AG04450 (cell line): ENCODE measurements at regions of chr1 and their contacts with region 1.

Region 1: DNA sequence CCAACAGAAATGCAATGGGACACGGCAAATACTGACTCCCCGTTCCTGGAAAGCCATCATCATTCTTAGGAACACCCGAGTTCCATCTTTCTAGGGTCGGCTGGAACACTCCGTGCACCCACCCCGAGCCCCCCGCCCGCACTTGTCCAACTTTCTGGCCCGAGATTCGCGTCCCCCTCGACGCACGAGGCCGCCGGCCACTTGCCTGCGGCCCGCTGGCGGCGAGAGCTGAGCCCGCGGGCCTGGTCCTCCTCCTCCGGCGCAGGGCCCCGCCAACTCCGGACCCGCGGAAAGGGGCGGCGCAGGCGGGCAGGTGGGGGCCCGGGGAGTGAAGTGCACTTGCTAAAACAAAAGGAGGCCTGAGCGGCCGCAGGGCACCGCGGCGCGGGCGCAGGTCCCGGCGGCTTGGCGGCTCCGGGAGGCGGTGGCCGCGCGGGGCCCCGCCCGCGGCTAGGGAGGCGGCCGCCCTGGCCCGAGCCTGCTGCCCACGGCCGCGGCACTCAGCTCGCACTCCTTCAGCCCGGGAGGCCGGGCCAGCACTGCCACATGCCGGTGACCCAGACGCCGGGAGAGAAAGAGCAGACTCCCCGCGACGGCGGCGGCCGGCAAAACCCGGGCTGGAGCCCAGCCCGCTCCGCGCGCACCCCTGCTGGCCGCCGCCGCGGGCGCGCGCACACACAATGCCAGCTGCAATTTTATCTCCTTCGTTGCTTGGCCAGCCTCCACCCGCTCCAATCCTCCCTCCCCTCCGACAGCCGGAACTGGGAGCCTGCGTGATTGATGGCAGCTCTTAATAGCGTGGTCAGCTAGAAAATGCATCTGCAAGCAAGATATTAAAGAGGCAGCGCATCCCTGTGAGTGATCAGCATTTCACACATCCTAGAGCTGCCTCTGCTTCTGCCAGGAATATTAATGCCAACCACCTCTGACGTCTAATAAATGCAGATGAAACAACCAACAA is 114.3 kb downstream of the RERE start:
- DNase-seq: peak; percentile 68
- H3K4me3 ChIP-seq: peak overlapping the region; percentile 77
- H3K27ac ChIP-seq: peak overlapping the region; percentile 35
- H3K27me3 ChIP-seq: no peaks in the 10 kb centered on the region
- CTCF ChIP-seq: peak; percentile 11; the same call in 1 of the 2 replicates

Region 2: DNA sequence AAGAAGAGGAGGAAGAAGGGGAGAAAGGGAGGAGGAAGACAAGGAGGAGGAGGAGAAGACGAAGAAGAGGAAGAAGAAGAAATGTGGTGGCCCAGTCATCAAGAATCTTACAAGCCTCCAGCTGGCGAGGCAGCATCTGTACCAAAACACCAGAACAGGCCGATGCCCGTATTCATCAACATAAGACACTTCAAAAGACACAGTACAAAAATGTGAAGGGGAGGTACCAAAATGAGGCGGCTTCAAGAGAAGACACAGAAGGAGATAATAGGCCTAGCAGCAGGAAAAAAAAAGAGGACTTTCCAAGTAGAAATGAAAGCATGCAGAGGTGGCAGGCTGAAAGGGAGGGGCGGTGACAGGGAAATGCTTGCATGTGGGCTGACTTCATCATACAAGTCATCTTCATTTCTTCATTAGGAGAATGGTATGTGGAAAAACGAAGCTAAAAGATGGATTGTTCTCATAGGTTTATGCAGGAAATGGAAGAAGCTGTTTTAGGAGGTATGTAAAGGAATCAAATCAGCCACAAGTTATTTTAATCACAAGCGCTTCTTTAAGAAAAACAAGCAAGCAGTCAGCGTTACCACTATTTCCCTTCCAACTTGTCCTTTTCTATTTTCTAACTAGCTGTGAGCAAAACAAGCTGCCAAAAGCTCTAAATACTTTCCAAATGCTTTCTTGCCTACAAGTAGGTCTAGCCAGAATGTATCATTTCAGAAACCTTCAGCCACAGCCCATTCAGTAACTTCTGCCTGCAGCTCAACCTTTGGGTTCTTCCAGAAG is 192.9 kb before region 1 on chr1:
- CTCF ChIA-PET with region 1: no interaction called
- POLR2A ChIA-PET with region 1: no interaction called
- DNase-seq: peak; percentile 67
- H3K4me3 ChIP-seq: peak overlapping the region; percentile 39
- H3K27ac ChIP-seq: peak overlapping the region; percentile 88
- H3K27me3 ChIP-seq: no peaks in the 10 kb centered on the region
- CTCF ChIP-seq: no peak

Region 3: DNA sequence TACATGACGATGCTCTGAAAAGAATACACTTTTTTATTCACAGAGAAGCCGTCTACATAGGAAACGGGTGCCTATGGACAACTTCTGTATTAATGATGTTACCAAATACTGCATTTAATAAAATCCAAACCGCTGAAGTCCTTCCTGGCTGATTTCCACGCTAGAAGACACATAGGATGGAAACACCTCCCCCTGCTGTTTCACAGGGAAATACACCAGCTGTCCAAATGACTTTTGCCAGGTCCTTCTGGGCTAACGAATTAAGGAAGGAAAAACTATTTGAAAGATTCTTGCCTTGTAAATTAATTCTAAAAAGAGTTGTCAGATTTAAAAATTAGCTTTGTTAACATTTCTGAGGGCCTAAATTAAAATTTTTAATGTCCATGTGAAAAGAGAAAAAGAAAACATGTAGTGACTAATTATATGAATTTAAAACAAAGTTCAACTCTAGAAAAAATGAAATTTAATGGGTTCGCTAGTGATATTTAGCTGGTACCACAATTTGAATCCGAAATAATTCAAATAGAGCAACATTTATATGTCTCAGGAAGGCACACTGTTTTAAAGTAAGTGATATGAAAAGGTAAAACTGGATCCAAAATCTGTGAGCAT is 31.7 kb before region 1 on chr1:
- CTCF ChIA-PET with region 1: interaction called, 12 read pairs
- POLR2A ChIA-PET with region 1: no interaction called
- DNase-seq: peak; percentile 56
- H3K4me3 ChIP-seq: no peak overlapping the region
- H3K27ac ChIP-seq: no peak overlapping the region
- H3K27me3 ChIP-seq: no peaks in the 10 kb centered on the region
- CTCF ChIP-seq: peak; percentile 86

Region 4: DNA sequence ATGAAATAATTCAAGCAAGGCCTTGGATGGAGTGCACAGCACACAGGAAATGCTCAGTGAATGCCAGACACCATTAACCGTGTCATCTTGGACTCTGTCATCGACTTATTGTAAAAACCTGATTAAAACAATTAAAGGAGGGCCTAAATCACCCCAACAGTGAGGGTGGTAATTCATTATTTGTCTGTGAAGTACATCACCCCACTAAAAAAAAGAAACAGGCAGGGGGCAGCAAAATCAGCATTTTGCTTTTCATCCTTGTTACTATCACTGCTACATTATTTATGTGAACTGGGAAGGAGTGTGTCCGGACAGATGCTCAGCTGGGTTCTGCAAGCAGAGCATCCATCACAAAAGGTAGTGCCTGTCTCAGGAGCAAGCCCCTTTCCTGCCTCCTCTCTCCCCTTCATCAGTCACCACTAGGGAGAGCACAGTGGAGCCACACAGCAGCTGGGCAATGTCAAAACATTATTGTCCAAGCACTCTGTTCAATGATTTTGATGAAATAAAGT is 15.8 kb after region 1 on chr1:
- CTCF ChIA-PET with region 1: interaction called, 14 read pairs
- POLR2A ChIA-PET with region 1: interaction called, 3 read pairs
- DNase-seq: no peak
- H3K4me3 ChIP-seq: no peak overlapping the region
- H3K27ac ChIP-seq: no peak overlapping the region
- H3K27me3 ChIP-seq: no peaks in the 10 kb centered on the region
- CTCF ChIP-seq: peak; percentile 51